Activated CD8-positive, alpha-beta T cell treated with anti-CD3 and anti-CD28 coated beads, Interleukin-2, amount 10 ng/mL, durations not matched to agents 7 days and 5 days (primary cell): ENCODE measurements at regions of chr19 and their contacts with region 1.

Region 1: GRCh38 chr19:14031719-14032480 is at the start of gene IL27RA:
- DNase-seq: peak; percentile 88
- ATAC-seq: peak; percentile 81
- H3K4me3 Mint-ChIP-seq: peak within 1 kb of the TSS; percentile 94
- H3K27ac Mint-ChIP-seq: peak within 1 kb of the TSS; percentile 96
- H3K4me1 Mint-ChIP-seq: peaks cover 20% of the 10 kb centered on the region
- H3K27me3 Mint-ChIP-seq: peaks cover 2% of the 10 kb centered on the region
- total RNA-seq, gene IL27RA: 39.7 to 39.8 TPM

Region 2: DNA sequence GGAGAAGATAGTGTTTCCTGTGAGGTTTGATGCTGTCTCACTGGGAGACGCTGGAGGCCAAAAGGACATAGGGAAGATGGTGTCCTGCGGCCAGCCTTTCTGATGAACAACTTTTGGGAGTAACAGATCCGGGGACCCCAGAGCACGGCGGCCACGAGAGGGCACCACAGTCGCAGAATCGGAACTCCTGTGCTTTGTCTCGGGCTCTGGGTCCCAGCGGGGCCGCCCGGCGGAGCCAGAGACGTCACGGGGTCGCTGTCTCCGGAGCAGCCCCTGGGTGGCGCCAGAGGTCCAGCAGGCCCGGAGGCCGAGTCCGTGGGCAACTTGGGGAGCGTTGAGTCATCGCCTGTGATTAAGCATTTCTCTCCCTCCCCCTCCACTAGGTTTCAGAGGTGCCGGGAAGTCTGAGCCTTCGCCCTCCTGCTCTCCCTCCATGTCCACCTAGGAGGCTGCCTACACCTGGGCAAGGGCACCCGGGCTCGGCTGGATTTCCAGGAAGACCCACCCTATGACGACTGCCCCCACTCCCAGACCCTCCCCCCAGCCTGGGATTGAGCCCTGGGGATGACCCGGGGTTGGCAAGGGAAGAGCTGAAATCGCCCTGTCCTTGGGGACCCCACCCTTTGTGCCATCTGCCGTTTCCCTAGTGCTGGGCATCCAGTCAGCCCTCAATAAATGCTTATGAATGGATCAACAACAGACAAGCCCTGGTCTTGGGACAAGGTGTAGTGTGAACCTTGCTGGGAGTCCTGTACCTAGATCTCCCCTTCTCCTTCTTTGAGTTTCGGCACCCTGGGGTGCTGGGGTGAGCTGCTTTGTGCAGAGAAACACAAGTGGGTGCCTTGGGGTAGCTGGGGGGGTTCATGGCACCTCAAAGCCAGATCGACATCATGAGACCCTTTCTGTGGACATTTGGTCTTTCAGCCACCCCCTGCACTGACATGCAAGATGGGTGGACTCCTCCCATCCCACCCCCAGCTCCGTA is 151.5 kb before region 1 on chr19:
- CTCF ChIA-PET with region 1: interaction called, 10 read pairs
- POLR2A ChIA-PET with region 1: interaction called, 8 read pairs
- DNase-seq: peak; percentile 99
- ATAC-seq: peak; percentile 96
- H3K4me3 Mint-ChIP-seq: peak overlapping the region; percentile 54
- H3K27ac Mint-ChIP-seq: peak overlapping the region; percentile 64
- H3K4me1 Mint-ChIP-seq: peaks cover 45% of the 10 kb centered on the region
- H3K27me3 Mint-ChIP-seq: peaks cover 8% of the 10 kb centered on the region

Region 3: DNA sequence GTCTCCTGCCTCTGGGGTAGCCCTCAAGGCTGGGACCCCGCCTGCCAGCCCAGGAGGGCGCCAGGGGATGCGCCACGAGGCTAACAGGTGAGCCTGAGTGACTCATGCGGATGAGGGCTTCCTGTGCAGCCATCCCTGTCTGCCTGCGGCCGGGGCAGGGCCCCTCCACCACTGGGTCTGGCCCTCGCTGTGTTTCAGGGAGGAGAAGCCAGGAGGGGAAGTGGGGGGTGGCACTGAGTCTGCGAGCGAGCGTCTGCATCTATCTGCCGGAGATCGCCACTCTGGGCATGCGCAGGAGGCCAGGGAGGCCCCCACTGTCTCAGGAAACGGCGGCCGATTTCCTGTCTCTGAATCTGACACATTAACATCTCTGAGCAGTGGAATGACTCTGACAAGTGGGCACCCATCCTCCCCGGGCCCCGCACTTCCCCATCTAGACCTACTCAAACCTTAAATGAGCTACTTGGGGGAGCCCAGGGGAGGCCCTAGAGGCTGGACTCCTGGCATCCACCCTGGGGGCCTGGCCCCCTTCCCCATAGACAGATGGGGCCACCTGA is 45.5 kb before region 1 on chr19:
- CTCF ChIA-PET with region 1: interaction called, 4 read pairs
- POLR2A ChIA-PET with region 1: interaction called, 28 read pairs
- DNase-seq: peak; percentile 100
- ATAC-seq: peak; percentile 94
- H3K4me3 Mint-ChIP-seq: peak overlapping the region; percentile 69
- H3K27ac Mint-ChIP-seq: peak overlapping the region; percentile 98
- H3K4me1 Mint-ChIP-seq: peaks cover 86% of the 10 kb centered on the region
- H3K27me3 Mint-ChIP-seq: no peaks in the 10 kb centered on the region

Region 4: DNA sequence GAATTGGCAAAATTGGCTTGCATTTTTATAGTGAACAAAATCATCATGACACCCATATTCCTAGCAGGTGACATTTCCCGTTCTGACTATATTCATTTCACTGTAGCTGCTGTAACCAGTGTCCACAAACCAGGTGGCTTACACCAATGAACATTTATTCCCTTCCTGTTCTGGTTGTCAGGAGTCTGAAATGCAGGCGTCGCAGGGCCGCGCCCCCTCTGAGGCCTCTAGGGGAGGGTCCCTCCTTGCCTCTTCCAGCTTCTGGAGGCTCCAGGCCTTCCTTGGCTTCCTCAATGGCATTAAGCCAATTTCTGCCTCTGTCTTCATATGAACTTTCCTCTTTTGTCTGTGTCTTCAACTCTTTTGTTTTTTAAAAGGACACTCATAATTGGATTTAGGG is 10.4 kb before region 1 on chr19:
- CTCF ChIA-PET with region 1: interaction called, 9 read pairs
- POLR2A ChIA-PET with region 1: interaction called, 13 read pairs
- DNase-seq: no peak
- ATAC-seq: no peak
- H3K4me3 Mint-ChIP-seq: no peak overlapping the region
- H3K27ac Mint-ChIP-seq: no peak overlapping the region
- H3K4me1 Mint-ChIP-seq: peaks cover 16% of the 10 kb centered on the region
- H3K27me3 Mint-ChIP-seq: peaks cover under 1% of the 10 kb centered on the region

Region 5: DNA sequence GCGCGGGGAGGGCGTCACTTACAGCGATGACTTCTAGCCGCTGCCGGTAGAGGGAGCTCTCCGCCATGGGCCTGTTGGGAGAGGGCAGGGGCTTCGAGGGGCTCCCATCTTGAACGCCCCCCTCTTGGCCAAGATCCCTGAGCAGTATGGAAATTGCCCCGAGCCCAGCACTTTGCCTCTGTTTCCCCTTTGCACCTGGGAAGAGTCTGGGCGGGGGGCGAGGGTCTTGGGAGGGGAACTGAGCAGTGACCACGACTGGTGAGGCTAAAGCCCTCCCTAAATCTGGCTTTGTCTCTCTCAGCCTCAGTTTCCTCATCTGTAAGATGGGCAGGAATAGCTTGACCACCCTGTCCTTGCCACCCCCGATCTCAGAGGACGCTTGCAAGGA is 27.2 kb after region 1 on chr19:
- CTCF ChIA-PET with region 1: interaction called, 13 read pairs
- POLR2A ChIA-PET with region 1: interaction called, 3 read pairs
- DNase-seq: peak; percentile 67
- ATAC-seq: no peak
- H3K4me3 Mint-ChIP-seq: no peak overlapping the region
- H3K27ac Mint-ChIP-seq: no peak overlapping the region
- H3K4me1 Mint-ChIP-seq: peaks cover 14% of the 10 kb centered on the region
- H3K27me3 Mint-ChIP-seq: peaks cover 46% of the 10 kb centered on the region

Region 6: DNA sequence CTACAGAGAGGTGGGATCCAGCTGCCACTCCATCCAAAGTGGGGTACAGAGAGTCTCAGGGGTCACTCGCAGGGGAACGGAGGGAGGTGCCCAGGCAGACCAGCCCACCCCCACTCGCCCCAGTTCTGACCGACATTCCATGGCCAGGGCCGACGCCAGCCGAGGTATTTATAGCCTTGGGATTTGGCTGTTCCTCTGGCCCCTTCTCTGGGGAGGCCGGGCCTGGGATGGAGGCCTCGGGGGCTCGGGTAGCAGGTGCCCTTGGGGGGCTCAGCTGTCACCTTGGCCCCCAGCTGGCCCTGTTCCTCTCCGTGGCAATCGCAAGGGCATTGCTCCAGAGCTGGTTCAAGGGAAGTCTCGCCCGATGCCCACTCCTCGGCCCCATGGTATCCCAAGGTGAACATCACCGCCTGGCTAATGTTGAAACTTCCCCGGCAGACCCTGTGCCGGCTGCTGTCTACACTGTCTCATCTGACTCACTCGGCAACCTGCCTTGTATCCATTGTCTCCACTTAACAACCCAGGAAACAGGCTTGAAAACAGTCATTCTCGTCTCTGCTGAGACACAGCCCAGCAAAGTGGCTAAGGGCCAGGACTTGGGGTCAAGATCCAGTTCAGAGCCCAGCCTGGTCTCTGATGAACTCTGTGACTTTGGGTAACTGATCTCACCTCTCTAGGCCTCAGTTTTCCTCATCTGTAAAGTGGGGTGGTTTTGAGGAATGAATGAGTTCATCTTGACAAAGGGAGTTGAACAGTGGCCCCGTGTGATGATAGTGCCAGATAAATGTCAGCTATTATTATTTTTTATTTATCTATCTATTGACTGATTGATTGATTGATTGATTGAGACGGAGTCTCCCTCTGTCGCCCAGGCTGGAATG is 75.9 kb after region 1 on chr19:
- CTCF ChIA-PET with region 1: no interaction called
- POLR2A ChIA-PET with region 1: no interaction called
- DNase-seq: no peak
- ATAC-seq: no peak
- H3K4me3 Mint-ChIP-seq: no peak overlapping the region
- H3K27ac Mint-ChIP-seq: no peak overlapping the region
- H3K4me1 Mint-ChIP-seq: peaks cover 19% of the 10 kb centered on the region
- H3K27me3 Mint-ChIP-seq: no peaks in the 10 kb centered on the region

Region 7: GRCh38 chr19:14149509-14149994 is 117.7 kb after region 1 on chr19:
- CTCF ChIA-PET with region 1: no interaction called
- POLR2A ChIA-PET with region 1: no interaction called
- DNase-seq: peak; percentile 72
- ATAC-seq: peak; percentile 83
- H3K4me3 Mint-ChIP-seq: peak overlapping the region; percentile 80
- H3K27ac Mint-ChIP-seq: peak overlapping the region; percentile 99
- H3K4me1 Mint-ChIP-seq: peaks cover 35% of the 10 kb centered on the region
- H3K27me3 Mint-ChIP-seq: no peaks in the 10 kb centered on the region